Right ventricle myocardium inferior (tissue), 1 donor: ENCODE measurements at regions of chr2 and their contacts with region 1.

Region 1: GRCh38 chr2:59301466-59302402 is 1060.6 kb upstream of the FANCL start:
- DNase-seq: no peak
- ATAC-seq: peak; percentile 76

Region 2: GRCh38 chr2:59259913-59260312 is 41.8 kb before region 1 on chr2:
- intact Hi-C with region 1: no loop called
- DNase-seq: no peak
- ATAC-seq: no peak

Region 3: GRCh38 chr2:60119791-60120190 is 818.1 kb after region 1 on chr2:
- intact Hi-C with region 1: loop called (anchors 10 kb)
- DNase-seq: no peak
- ATAC-seq: no peak

Region 4: DNA sequence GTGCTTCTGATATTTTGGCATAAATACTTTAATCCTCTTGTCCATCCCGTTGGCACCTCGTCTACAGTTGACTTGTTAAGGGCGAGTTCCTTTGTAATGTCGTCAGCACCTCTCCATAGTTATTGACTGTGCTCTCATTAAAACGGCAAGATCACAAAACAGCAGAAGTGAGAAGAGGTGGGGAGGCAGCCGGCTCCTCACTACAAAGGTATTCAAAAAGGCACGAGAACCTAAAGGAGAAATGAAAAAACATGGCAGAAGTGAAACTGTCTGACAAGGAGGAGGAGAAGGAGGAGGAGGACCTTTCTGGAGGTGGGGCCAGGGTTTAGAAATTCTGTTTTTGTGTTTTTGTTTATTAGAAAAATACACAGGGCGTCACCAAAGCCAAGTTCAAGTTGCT is 1016.1 kb after region 1 on chr2:
- intact Hi-C with region 1: loop called (anchors 5 kb)
- DNase-seq: no peak
- ATAC-seq: no peak

Region 5: GRCh38 chr2:60581433-60582282 is 1279.9 kb after region 1 on chr2:
- intact Hi-C with region 1: loop called (anchors 5 kb)
- DNase-seq: peak; percentile 90
- ATAC-seq: peak; percentile 88